ENCODE measurements at regions of chr20 and their contacts with region 1.

Region 1: DNA sequence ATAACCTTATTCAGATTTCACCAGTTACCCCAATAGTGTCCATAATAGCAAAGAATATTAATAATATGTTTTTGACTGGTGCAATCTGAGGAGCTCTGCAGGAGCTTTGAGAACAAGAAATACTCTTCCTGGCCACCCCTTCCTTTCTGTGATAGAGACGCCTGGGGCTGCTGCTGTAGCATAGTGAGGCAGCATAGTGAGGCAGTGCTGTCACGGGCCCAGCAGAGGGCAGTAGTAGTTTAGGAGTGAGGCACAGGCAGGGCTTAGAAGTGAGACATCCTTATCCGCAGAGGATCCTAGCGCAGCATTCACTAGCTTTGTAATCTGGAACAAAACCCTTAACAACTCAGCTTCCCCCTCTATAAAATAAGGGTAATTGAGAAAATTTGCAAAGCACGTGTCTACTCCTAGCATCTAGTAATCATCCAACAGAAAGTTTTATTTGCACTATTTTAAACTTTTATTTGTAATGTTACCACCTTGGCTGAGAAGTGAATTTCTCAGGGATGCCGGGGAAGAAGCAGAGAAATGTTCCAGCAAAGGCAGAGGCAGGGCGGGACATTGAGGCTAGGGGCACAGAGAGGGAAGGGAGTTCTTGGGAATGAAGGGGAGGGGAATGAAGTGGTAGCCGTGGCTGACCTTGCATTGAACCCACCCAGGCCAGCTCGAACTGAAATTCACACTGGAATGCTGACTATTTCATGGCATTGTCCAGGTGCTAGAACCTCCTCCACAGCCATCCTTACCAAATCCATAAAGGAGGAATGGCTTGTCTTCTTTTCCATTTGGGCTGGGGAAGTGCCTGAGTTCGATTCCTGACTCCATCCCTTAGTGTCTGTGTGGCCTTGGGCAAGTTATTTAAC is 78.8 kb downstream of the CDS2 start:
- DNase-seq: peak; percentile 83
- CTCF ChIP-seq: peak; percentile 94

Region 2: GRCh38 chr20:5215672-5216304 is 10.2 kb after region 1 on chr20:
- CTCF ChIA-PET with region 1: interaction called, 126 read pairs
- POLR2A ChIA-PET with region 1: no interaction called
- DNase-seq: no peak
- CTCF ChIP-seq: no peak

Region 3: GRCh38 chr20:5297280-5298004 is 91.9 kb after region 1 on chr20:
- CTCF ChIA-PET with region 1: no interaction called
- POLR2A ChIA-PET with region 1: no interaction called
- DNase-seq: no peak
- CTCF ChIP-seq: no peak

Measured in GM10248 (cell line).